OCI-LY7 (cell line): ENCODE measurements at regions of chr19 and their contacts with region 1.

Region 1: GRCh38 chr19:3572132-3572854 is 451 bp upstream of the HMG20B start:
- DNase-seq: peak; percentile 99
- H3K4me3 ChIP-seq: peak overlapping the region; percentile 98
- H3K27ac ChIP-seq: peak overlapping the region; percentile 12
- H3K4me1 ChIP-seq: peaks cover 6% of the 10 kb centered on the region
- CTCF ChIP-seq: no peak

Region 2: DNA sequence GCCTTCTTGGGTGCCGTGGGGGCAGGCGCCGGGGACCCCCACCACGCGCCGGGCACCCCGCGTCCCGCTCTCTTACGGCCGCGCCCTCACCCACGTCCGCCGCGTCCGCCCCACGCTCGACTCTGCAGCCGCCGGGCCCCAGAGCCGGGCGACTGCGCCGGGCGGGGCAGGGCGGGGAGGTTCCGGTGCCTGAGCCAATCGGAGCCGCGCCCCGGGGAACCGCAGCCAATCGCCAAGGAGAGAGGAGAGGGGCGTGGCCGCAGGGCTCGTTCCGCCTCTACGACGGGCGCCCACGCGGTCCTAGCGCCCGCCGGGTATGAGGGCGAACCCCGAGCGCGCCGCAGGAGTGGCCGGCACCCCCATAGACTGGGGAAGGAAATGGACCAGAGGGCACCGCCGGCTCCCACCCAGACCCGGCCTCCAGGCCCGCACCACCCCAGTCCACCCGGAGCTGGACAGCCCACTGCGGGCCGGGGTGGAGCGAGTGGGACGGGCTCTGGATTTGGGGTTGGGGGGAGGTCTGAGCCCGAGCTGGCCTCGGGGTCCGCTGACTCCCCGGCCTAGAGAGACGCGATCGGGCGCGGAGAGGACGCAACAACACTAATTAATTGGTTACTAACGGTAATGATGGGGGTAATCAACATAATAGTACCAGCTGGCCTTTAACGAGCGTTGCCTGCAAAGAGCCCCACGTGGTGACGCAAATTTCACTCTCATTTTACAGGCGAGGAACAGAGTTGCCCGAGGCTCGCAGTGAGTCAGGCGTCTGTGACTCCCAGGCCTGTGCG is 14.6 kb before region 1 on chr19 and contains the start of gene MFSD12:
- CTCF ChIA-PET with region 1: no interaction called
- POLR2A ChIA-PET with region 1: interaction called, 5 read pairs
- intact Hi-C with region 1: loop called (anchors 1 kb)
- DNase-seq: peak; percentile 95
- H3K4me3 ChIP-seq: peak within 1 kb of the TSS; percentile 72
- H3K27ac ChIP-seq: peak within 1 kb of the TSS; percentile 51
- H3K4me1 ChIP-seq: peaks cover 74% of the 10 kb centered on the region
- CTCF ChIP-seq: no peak
- total RNA-seq, gene MFSD12: 74.4 and 79.4 TPM in 2 replicates